ENCODE measurements at regions of chr6 and their contacts with region 1.

Region 1: GRCh38 chr6:18264219-18264922 is at the start of gene DEK:
- DNase-seq: peak; percentile 91
- H3K4me3 Mint-ChIP-seq: peak within 1 kb of the TSS; percentile 96
- H3K27ac Mint-ChIP-seq: peak within 1 kb of the TSS; percentile 98
- H3K4me1 Mint-ChIP-seq: peaks cover 47% of the 10 kb centered on the region
- H3K27me3 Mint-ChIP-seq: no peaks in the 10 kb centered on the region
- total RNA-seq, gene DEK: 200 to 203 TPM

Region 2: DNA sequence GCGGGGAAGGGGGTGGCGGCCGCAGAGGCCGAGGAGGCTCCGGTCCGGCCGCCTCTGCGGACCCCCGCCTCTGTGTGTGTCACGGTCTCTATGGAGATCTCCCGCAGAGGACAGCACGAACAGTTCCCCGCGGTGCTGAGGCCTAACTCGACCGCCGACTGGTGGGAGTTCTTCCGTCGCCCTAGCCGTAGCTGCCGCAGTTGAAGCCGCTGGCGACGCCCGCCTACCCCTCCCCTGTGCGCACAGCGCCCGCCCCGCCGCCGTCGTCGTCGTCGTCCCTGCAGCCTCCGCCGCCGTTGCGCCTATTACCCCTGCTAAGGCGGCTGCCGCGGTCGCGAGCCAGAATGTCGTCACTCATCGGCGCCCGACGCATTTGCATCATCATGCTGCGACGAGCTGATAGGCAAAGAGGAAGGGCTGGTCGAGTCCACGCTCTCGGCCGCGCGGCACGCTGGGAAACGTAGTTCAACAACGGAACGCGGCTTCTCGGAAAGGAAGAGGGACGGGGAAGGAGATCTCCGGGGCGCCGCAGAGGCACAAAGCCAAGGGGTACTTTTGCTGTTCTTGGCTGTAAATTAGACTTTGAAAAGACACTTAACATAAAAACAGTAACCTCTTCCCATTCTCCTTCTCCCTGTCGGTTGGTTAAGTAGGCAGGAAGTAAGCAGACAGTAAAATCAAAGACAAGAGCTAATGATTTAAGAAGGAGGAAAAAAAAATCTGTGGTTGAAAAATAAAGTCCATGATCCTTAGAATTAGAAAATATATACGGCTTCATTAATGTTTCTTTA is 557.6 kb before region 1 on chr6 and contains the start of gene NUP153:
- CTCF ChIA-PET with region 1: no interaction called
- intact Hi-C with region 1: loop called (anchors 1 kb)
- DNase-seq: peak; percentile 100
- H3K4me3 Mint-ChIP-seq: peak within 1 kb of the TSS; percentile 93
- H3K27ac Mint-ChIP-seq: peak within 1 kb of the TSS; percentile 99
- H3K4me1 Mint-ChIP-seq: peaks cover 28% of the 10 kb centered on the region
- H3K27me3 Mint-ChIP-seq: no peaks in the 10 kb centered on the region
- total RNA-seq, gene NUP153: 65.3 to 67.2 TPM

Region 3: GRCh38 chr6:18155150-18155863 is 109.1 kb before region 1 on chr6 and contains the start of gene KDM1B:
- CTCF ChIA-PET with region 1: no interaction called
- intact Hi-C with region 1: loop called (anchors 1 kb)
- DNase-seq: peak; percentile 98
- H3K4me3 Mint-ChIP-seq: peak within 1 kb of the TSS; percentile 97
- H3K27ac Mint-ChIP-seq: peak within 1 kb of the TSS; percentile 88
- H3K4me1 Mint-ChIP-seq: peaks cover 22% of the 10 kb centered on the region
- H3K27me3 Mint-ChIP-seq: no peaks in the 10 kb centered on the region
- total RNA-seq, gene KDM1B: 14.4 to 15.2 TPM

Region 4: DNA sequence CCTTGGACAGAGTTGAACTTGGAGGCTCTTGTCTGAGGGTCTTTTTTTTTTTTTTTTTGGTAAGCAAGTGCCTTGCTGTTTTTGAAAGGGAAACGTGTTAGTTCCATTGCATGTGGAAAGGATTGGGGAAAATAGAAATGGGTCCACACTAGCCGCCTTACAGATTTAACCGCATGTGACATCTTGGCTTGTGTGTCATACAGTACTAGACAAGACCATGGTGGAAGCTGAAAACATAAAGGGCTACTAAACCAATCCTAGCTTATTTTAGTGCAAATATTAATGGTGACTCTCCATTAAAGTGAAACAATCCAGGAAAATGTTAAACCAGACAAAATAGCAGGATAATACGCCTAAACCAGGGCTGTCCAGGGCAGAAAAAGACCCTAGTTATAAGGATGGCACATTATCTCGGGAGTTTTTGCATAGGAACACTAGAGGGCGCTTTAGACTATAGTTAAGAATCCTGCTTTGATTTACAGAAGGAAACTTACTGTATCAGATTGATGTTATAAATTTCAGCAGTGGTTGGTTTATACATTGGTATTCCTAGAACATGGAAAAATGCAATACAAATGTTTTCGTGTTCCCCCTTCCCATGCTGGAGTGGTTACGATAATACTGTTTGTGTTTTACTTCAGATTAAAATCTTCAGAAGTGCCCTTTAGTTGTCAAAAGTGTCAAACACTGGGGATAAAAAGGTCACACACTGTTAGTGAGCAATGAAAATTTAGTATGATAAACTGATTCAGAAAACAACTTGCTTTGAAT is 59.7 kb after region 1 on chr6:
- CTCF ChIA-PET with region 1: no interaction called
- intact Hi-C with region 1: loop called (anchors 2 kb)
- DNase-seq: peak; percentile 12
- H3K4me3 Mint-ChIP-seq: no peak overlapping the region
- H3K27ac Mint-ChIP-seq: no peak overlapping the region
- H3K4me1 Mint-ChIP-seq: peaks cover 6% of the 10 kb centered on the region
- H3K27me3 Mint-ChIP-seq: no peaks in the 10 kb centered on the region

Region 5: GRCh38 chr6:18400831-18401446 is 136.6 kb after region 1 on chr6:
- CTCF ChIA-PET with region 1: no interaction called
- intact Hi-C with region 1: loop called (anchors 2 kb)
- DNase-seq: no peak
- H3K4me3 Mint-ChIP-seq: no peak overlapping the region
- H3K27ac Mint-ChIP-seq: peak overlapping the region; percentile 59
- H3K4me1 Mint-ChIP-seq: peaks cover 15% of the 10 kb centered on the region
- H3K27me3 Mint-ChIP-seq: no peaks in the 10 kb centered on the region

Region 6: GRCh38 chr6:18503593-18504231 is 239.3 kb after region 1 on chr6:
- CTCF ChIA-PET with region 1: no interaction called
- intact Hi-C with region 1: loop called (anchors 1 kb)
- DNase-seq: peak; percentile 56
- H3K4me3 Mint-ChIP-seq: no peak overlapping the region
- H3K27ac Mint-ChIP-seq: no peak overlapping the region
- H3K4me1 Mint-ChIP-seq: no peaks in the 10 kb centered on the region
- H3K27me3 Mint-ChIP-seq: no peaks in the 10 kb centered on the region